ENCODE measurements at regions of chr17 and their contacts with region 1.

Region 1: GRCh38 chr17:58631523-58632323 is 60.1 kb downstream of the TEX14 start:
- DNase-seq: peak; percentile 91
- ATAC-seq: peak; percentile 83
- H3K4me3 Mint-ChIP-seq: no peak overlapping the region
- H3K27ac Mint-ChIP-seq: no peak overlapping the region
- H3K4me1 Mint-ChIP-seq: peaks cover 3% of the 10 kb centered on the region
- H3K27me3 Mint-ChIP-seq: no peaks in the 10 kb centered on the region
- CTCF ChIP-seq: no peak

Region 2: DNA sequence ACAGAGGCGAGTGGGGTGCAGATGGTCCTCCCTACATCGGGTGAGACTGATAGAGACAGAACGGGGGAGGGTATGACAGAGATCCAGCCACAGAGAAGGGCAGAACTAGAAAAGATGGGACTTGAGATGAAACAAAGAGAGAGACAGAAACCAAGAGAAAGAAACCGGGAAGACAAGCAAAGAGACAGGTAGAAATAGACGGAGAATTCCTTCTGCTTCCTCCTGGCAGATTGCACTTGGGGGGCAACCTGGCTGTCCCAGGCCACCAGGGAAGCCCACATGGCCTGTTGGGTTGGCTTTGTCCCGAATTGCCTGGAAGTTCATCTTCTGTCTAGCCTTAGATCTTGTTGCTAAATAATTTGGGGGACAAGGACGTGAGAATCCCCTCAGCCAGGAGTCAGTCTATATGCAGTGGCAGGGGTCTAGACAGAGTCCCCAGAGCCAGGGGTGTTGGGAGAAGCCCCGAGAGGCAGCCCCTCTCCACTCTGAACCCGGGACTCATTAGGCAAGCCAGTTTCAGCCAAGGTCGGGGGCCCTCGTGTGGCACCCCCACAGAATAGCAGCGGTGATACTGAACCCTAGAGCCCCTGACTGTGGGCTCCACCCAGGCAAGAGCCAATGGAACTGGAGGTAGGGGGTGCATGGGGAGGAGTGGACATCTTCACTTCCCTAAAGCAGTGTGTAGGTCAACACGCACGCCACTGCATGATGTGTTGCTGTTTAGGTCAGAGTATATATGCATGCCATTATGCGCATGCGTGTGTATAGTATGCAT is 302.5 kb before region 1 on chr17:
- CTCF ChIA-PET with region 1: no interaction called
- POLR2A ChIA-PET with region 1: interaction called, 19 read pairs
- intact Hi-C with region 1: no loop called
- DNase-seq: peak; percentile 75
- ATAC-seq: peak; percentile 36
- H3K4me3 Mint-ChIP-seq: peak overlapping the region; percentile 100
- H3K27ac Mint-ChIP-seq: peak overlapping the region; percentile 93
- H3K4me1 Mint-ChIP-seq: peaks cover 65% of the 10 kb centered on the region
- H3K27me3 Mint-ChIP-seq: peaks cover 2% of the 10 kb centered on the region
- CTCF ChIP-seq: no peak

Region 3: DNA sequence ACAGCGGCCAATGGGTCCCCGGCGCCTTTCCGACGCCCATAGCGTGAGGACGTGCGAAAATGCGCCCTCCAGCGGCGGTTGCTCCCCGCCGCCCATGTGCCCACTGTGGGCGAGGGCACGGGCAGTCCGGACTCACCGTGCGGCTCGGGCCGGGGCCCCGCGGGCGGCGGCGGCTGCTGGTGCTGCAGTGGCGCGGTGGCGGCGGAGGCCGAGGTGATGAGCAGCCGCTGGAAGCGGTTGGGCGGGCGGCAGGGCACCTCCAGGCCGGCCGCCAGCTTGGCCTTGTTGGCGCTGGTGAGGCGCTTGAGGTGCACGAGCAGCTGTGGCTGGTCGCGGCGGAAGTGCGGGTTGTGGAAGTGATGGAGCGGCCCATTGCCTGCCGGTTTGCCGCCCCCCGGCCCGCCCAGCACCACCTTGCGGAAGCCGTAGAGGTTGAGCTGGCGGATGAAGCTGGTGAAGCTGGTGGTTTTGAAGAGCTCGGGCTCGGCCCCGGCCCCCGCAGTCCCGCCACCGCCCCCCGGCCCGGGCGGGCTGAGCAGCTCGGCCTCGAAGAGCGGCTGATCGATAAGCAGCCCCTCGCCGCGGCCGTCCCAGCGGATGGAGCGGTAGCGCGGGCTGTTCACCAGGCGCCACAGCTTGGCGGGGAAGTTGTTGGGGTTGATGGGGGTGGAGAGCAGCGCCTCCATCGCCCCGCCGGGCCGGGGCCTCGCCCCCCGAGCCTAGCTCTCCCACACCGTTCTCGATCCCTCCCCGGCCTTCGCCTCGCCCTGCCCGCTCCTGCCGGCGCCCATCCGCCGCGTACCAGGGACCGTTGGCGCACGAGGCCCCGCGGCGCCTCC is 143.9 kb before region 1 on chr17 and contains the start of gene HSF5:
- CTCF ChIA-PET with region 1: no interaction called
- POLR2A ChIA-PET with region 1: interaction called, 27 read pairs
- intact Hi-C with region 1: no loop called
- DNase-seq: peak; percentile 79
- ATAC-seq: peak; percentile 96
- H3K4me3 Mint-ChIP-seq: peak within 1 kb of the TSS; percentile 69
- H3K27ac Mint-ChIP-seq: peak within 1 kb of the TSS; percentile 66
- H3K4me1 Mint-ChIP-seq: peaks cover 19% of the 10 kb centered on the region
- H3K27me3 Mint-ChIP-seq: no peaks in the 10 kb centered on the region
- CTCF ChIP-seq: no peak
- total RNA-seq, gene HSF5: 4.5 and 5.5 TPM in 2 replicates

Region 4: GRCh38 chr17:58587702-58588254 is 43.9 kb before region 1 on chr17:
- CTCF ChIA-PET with region 1: interaction called, 10 read pairs
- POLR2A ChIA-PET with region 1: interaction called, 45 read pairs
- intact Hi-C with region 1: loop called (anchors 1 kb)
- DNase-seq: peak; percentile 21
- ATAC-seq: peak; percentile 86
- H3K4me3 Mint-ChIP-seq: no peak overlapping the region
- H3K27ac Mint-ChIP-seq: no peak overlapping the region
- H3K4me1 Mint-ChIP-seq: peaks cover 3% of the 10 kb centered on the region
- H3K27me3 Mint-ChIP-seq: no peaks in the 10 kb centered on the region
- CTCF ChIP-seq: no peak

Region 5: GRCh38 chr17:58658804-58659713 is 27.3 kb after region 1 on chr17:
- CTCF ChIA-PET with region 1: interaction called, 3 read pairs
- POLR2A ChIA-PET with region 1: interaction called, 321 read pairs
- intact Hi-C with region 1: loop called (anchors 1 kb)
- DNase-seq: peak; percentile 57
- ATAC-seq: peak; percentile 79
- H3K4me3 Mint-ChIP-seq: peak overlapping the region; percentile 84
- H3K27ac Mint-ChIP-seq: peak overlapping the region; percentile 100
- H3K4me1 Mint-ChIP-seq: peaks cover 13% of the 10 kb centered on the region
- H3K27me3 Mint-ChIP-seq: no peaks in the 10 kb centered on the region
- CTCF ChIP-seq: no peak

Region 6: DNA sequence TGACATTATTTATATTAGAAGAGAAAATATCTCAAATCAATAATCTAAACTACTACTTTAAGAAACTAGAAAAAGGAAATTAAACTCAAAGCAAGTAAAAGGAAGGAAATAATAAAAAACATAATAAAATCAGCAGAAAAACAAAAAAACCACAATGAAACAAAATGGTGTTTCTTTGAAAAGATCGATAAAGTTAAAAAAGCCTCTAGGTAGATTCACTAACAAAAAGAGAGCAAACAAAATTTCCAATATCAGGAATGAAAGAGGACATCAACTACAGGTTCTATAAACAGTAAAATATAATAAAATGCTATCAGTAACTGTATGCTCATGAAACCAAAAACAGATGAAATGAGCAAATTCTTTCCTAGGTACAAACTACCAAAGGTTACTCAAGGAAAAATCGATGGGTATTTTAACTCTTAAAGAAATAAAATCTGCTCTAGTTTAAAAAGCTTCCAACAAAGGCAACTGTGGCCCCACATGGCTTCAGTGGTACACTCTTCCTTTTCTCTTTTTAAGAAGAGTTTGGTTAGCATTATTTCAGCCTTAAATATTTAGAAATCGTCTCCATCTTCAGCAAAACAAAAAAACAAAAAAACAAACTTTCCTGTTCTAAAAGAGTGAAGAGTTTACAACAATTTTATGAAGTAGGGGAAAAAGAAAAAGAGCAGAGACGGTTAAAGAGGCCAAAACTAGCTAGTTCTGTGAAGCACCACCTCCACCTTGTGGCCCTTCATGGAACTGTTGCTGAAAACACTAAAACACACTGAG is 372.8 kb after region 1 on chr17:
- CTCF ChIA-PET with region 1: interaction called, 3 read pairs
- POLR2A ChIA-PET with region 1: interaction called, 20 read pairs
- intact Hi-C with region 1: loop called (anchors 1 kb)
- DNase-seq: peak; percentile 35
- ATAC-seq: peak; percentile 35
- H3K4me3 Mint-ChIP-seq: no peak overlapping the region
- H3K27ac Mint-ChIP-seq: peak overlapping the region; percentile 79
- H3K4me1 Mint-ChIP-seq: peaks cover 29% of the 10 kb centered on the region
- H3K27me3 Mint-ChIP-seq: no peaks in the 10 kb centered on the region
- CTCF ChIP-seq: no peak

Measured in activated B cell treated with CpG ODN at 0.5 μM for 24 hours (primary cell).